ENCODE measurements at regions of chr1 and their contacts with region 1.

Region 1: DNA sequence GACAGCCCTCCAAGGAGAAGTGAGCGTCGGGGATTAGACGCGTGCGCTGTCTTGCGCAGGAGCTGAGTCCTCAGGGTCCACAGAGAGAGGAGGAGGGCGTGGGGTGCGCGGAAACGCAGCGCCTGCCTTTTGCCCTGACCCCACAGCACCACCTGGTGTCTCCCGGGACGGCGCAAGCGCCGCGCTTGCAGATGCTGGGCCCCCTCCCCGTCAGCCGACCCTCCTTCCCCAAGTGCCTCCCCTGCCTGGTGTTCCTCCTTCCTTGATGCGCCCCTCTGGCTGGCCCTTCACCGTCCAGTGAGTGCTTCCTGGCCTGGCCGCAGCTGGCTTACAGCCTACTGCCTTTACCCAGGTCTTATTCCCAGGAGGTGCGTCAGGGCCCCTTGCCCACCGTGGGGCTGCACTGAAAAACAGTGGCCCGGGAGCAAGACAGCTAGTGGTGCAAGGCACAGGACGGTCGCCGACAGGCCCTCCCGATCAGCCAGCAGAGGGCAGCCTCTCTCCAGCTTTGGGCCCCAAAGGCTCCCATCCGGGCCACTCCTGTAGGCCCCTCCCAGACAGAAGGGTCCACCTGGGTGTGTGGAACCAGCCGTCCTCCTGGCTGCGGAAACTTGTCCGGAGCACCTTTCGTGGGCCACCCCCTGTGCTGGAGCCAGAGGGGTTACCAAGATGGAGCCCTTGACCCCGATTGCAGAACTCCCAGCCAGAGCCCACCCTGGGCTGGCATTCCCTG is 12.9 kb upstream of the PHLDA3 start:
- DNase-seq: no peak
- H3K4me3 ChIP-seq: no peak overlapping the region; the same call in 1 of the 2 replicates
- CTCF ChIP-seq: peak; percentile 93

Region 2: GRCh38 chr1:201468844-201469511 is 12.9 kb before region 1 on chr1 and contains the start of gene PHLDA3:
- CTCF ChIA-PET with region 1: interaction called, 22 read pairs
- POLR2A ChIA-PET with region 1: interaction called, 11 read pairs
- DNase-seq: no peak
- H3K4me3 ChIP-seq: peak within 1 kb of the TSS; percentile 97
- CTCF ChIP-seq: no peak

Region 3: GRCh38 chr1:201506556-201507359 is 24.8 kb after region 1 on chr1 and contains the start of gene CSRP1:
- CTCF ChIA-PET with region 1: interaction called, 1,139 read pairs
- POLR2A ChIA-PET with region 1: interaction called, 11 read pairs
- DNase-seq: no peak
- H3K4me3 ChIP-seq: peak within 1 kb of the TSS; percentile 83
- CTCF ChIP-seq: no peak

Region 4: DNA sequence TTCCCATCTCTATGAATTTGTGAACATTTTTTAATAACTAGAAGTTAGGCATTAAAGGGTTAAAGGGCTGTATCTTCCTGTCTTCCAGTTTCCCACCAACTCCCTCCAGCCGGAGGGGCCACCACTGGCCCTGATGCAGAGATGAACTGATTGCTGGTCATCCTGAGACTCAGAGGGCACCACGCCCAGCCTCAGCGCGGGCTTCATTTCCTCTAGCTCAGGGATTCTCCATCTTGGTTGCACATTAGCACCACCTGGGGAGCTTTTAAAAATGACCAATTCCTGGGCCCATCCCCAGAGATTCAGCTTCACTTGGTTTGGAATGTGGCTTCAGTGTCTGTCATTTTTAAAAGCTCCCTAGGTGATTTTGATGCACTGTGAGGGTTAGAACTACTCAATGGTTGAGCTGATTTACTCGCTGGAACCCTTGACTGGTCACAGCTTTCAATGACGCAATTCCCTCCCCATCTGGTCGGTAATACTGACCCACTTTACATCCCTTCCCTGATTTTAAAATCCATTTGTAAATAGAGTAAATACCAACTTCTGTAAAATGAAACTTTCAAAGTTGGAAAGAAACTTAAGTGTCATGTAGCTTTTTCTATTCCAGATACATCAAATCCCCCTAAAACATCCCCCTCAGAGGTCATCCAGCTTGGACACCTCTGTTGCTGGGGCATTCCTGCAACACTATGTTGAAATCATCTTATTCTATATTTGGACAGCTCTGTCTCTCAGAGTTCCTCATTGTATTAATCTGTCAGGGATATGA is 62.1 kb after region 1 on chr1:
- CTCF ChIA-PET with region 1: no interaction called
- POLR2A ChIA-PET with region 1: no interaction called
- DNase-seq: no peak
- H3K4me3 ChIP-seq: no peak overlapping the region
- CTCF ChIP-seq: no peak

Region 5: GRCh38 chr1:201602413-201603265 is 120.7 kb after region 1 on chr1:
- CTCF ChIA-PET with region 1: no interaction called
- POLR2A ChIA-PET with region 1: no interaction called
- DNase-seq: peak; percentile 87
- H3K4me3 ChIP-seq: no peak overlapping the region
- CTCF ChIP-seq: no peak

Region 6: GRCh38 chr1:201916649-201917249 is 434.8 kb after region 1 on chr1:
- CTCF ChIA-PET with region 1: no interaction called
- POLR2A ChIA-PET with region 1: no interaction called
- DNase-seq: no peak
- H3K4me3 ChIP-seq: peak overlapping the region; percentile 3; the same call in 1 of the 2 replicates
- CTCF ChIP-seq: no peak